HepG2 (cell line): ENCODE measurements at regions of chr12 and their contacts with region 1.

Region 1: DNA sequence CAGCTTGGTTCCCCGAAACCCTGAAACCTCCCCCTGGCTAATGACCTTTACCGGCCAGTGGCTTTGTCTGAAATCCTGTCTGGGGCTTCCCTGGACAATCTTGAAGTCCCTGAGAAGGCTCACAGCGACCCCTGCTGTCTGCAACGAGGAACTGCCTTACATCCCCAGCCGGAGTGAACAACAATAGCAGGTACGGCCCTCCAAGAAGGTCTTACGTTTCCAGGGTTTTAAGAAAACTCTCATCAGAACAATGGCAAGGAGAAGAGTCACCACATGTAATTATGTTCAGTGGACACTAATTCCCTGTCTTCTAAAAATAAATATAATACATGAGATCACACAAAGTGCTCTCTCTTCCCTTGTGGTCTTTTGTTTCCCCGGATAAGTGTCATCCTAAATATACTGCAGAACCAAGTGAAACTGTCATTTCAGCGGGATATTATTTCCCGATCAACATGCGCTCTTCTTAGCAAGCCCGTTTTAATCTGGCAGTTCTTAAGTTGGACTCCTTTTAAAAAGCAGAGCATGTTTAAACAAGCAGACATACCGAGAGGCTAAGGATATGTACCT is 53.3 kb downstream of the RBM19 start:
- DNase-seq: peak; percentile 50
- ATAC-seq: peak; percentile 77
- H3K4me3 ChIP-seq: no peak overlapping the region
- H3K27ac ChIP-seq: no peak overlapping the region
- H3K4me1 ChIP-seq: no peaks in the 10 kb centered on the region
- H3K27me3 ChIP-seq: no peaks in the 10 kb centered on the region
- CTCF ChIP-seq: peak; percentile 90
- EP300 ChIP-seq: no peak
- POLR2A ChIP-seq: no peak
- RAD21 ChIP-seq: peak; percentile 70

Region 2: DNA sequence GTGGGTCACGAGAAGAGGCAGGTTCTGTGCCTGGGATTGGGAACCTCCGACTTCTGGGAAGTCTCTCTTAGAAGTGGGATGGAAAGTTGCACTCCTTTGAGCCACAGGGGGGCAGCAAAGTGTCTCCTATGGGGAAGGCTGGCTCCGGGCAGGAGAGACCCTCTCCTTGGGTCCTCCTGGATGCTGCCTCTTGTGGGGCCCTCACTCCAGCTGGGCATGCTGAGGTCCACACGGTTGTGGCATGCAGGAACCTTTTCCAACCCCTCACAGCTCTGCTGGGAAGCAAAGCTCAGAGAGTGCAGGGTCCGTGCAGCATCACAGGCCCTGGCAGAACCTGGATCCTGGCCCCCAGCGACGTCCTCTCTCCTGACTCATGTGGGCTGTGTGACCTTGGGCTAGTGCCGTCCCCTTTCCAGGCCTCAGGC is 473.2 kb before region 1 on chr12:
- CTCF ChIA-PET with region 1: interaction called, 8 read pairs
- POLR2A ChIA-PET with region 1: no interaction called
- in situ Hi-C with region 1: loop called (anchors 10 kb)
- intact Hi-C with region 1: loop called (anchors 1 kb)
- DNase-seq: peak; percentile 40
- ATAC-seq: peak; percentile 86
- H3K4me3 ChIP-seq: no peak overlapping the region
- H3K27ac ChIP-seq: no peak overlapping the region
- H3K4me1 ChIP-seq: peaks cover 7% of the 10 kb centered on the region; the same call in 1 of the 2 replicates
- H3K27me3 ChIP-seq: peaks cover 0 to 22% of the 10 kb centered on the region in 2 experiments; a peak in 1 of 5 replicates
- CTCF ChIP-seq: peak; percentile 86
- EP300 ChIP-seq: no peak
- POLR2A ChIP-seq: no peak
- RAD21 ChIP-seq: peak; percentile 58

Region 3: GRCh38 chr12:113462117-113462774 is 450.6 kb before region 1 on chr12:
- CTCF ChIA-PET with region 1: interaction called, 18 read pairs
- POLR2A ChIA-PET with region 1: no interaction called
- in situ Hi-C with region 1: loop called (anchors 5 kb)
- intact Hi-C with region 1: loop called (anchors 1 kb)
- DNase-seq: peak; percentile 44
- ATAC-seq: peak; percentile 81
- H3K4me3 ChIP-seq: peak overlapping the region in 1 of 3 experiments; percentile 7; a peak in 1 of 6 replicates
- H3K27ac ChIP-seq: no peak overlapping the region
- H3K4me1 ChIP-seq: no peaks in the 10 kb centered on the region
- H3K27me3 ChIP-seq: peaks cover 11 to 45% of the 10 kb centered on the region in 2 experiments
- CTCF ChIP-seq: peak; percentile 88
- EP300 ChIP-seq: no peak
- POLR2A ChIP-seq: no peak
- RAD21 ChIP-seq: peak; percentile 58

Region 4: GRCh38 chr12:113485330-113485729 is 427.5 kb before region 1 on chr12:
- CTCF ChIA-PET with region 1: no interaction called
- POLR2A ChIA-PET with region 1: no interaction called
- in situ Hi-C with region 1: no loop called
- intact Hi-C with region 1: no loop called
- DNase-seq: no peak
- ATAC-seq: no peak
- H3K4me3 ChIP-seq: no peak overlapping the region
- H3K27ac ChIP-seq: no peak overlapping the region
- H3K4me1 ChIP-seq: no peaks in the 10 kb centered on the region
- H3K27me3 ChIP-seq: no peaks in the 10 kb centered on the region; a peak in 2 of 5 replicates
- CTCF ChIP-seq: no peak
- EP300 ChIP-seq: no peak
- POLR2A ChIP-seq: no peak
- RAD21 ChIP-seq: no peak

Region 5: DNA sequence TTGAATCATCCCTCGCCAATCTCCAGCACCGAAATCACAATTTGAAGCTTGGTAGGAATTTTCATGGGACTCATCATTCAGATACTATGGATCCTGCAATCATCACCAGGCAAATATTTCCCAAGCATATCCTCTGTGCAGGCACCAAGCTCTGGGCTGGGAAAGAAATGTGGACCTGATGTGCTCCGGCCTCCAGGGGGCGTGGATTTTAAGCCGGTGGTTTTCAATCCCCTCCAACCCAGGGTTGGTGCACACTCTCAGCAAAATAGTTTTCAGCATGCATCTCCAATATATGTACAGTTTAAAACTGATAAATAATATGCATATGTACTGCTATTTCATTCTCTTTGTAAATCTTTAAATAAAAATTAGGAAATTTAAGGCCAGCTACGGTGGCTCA is 45.6 kb before region 1 on chr12:
- CTCF ChIA-PET with region 1: interaction called, 4 read pairs
- POLR2A ChIA-PET with region 1: no interaction called
- in situ Hi-C with region 1: no loop called
- intact Hi-C with region 1: loop called (anchors 1 kb)
- DNase-seq: peak; percentile 13
- ATAC-seq: peak; percentile 78
- H3K4me3 ChIP-seq: no peak overlapping the region
- H3K27ac ChIP-seq: no peak overlapping the region
- H3K4me1 ChIP-seq: no peaks in the 10 kb centered on the region
- H3K27me3 ChIP-seq: no peaks in the 10 kb centered on the region
- CTCF ChIP-seq: peak; percentile 31; the same call in 1 of the 2 replicates
- EP300 ChIP-seq: no peak
- POLR2A ChIP-seq: no peak
- RAD21 ChIP-seq: no peak